Gastrocnemius medialis (tissue), 4 donors: ENCODE measurements at regions of chr15 and their contacts with region 1.

Region 1: GRCh38 chr15:63891079-63891767 is 57.5 kb upstream of the HERC1 start:
- DNase-seq: peak; percentile 39 to 79
- ATAC-seq: peak; percentile 27 to 39
- H3K4me3 ChIP-seq: no peak overlapping the region
- H3K27ac ChIP-seq: peak overlapping the region in 3 of 4 donors; percentile 15 to 93 (median 35)
- H3K4me1 ChIP-seq: peaks cover 58 to 66% of the 10 kb centered on the region in 2 donors
- H3K27me3 ChIP-seq: no peaks in the 10 kb centered on the region
- CTCF ChIP-seq: peak; percentile 80 to 87 (median 83)
- POLR2A ChIP-seq: no peak

Region 2: DNA sequence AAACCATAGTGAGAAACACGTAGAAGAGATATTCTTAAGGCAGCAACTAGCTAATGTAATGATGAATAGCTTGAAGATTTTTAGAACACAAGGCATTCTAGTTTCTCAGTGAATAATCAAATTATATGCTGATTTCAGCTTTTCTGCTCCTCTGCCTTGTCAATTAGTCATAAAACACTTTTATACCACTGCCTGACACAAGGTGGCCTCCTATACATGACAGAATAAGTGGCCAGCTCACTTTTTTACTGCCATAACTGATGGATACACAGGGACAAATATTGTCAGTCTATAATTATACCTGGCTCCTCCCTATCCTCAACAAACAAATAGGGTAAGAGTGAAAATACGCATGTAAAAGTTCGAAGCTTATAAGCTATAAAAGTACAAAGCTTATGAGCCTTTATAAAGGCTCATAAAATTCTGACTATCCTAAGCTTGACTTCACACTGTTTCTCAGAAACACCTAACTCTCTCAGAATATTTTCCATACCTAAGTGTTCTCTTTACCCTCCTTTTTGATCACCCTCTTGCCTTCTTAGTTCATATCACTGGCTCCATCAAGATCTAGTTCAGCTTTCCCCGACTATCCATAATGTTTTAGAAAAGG is 139.0 kb before region 1 on chr15:
- in situ Hi-C with region 1: loop called in 3 of 4 experiments (anchors 5 to 25 kb)
- intact Hi-C with region 1: loop called (anchors 1 kb)
- DNase-seq: peak in 1 of 2 donors; percentile 27
- ATAC-seq: peak; percentile 90 to 91
- H3K4me3 ChIP-seq: no peak overlapping the region
- H3K27ac ChIP-seq: peak overlapping the region; percentile 29 to 66 (median 50)
- H3K4me1 ChIP-seq: peaks cover 0 to 13% of the 10 kb centered on the region in 2 donors
- H3K27me3 ChIP-seq: no peaks in the 10 kb centered on the region
- CTCF ChIP-seq: peak; percentile 77 to 82 (median 79)
- POLR2A ChIP-seq: no peak

Region 3: GRCh38 chr15:63833021-63833696 is 58.1 kb before region 1 on chr15:
- in situ Hi-C with region 1: no loop called
- intact Hi-C with region 1: loop called (anchors 2 kb)
- DNase-seq: peak; percentile 5 to 46
- ATAC-seq: peak; percentile 53 to 68
- H3K4me3 ChIP-seq: peak overlapping the region; percentile 83 to 95 (median 90)
- H3K27ac ChIP-seq: peak overlapping the region; percentile 90 to 98 (median 96)
- H3K4me1 ChIP-seq: peaks cover 24 to 35% of the 10 kb centered on the region in 2 donors
- H3K27me3 ChIP-seq: no peaks in the 10 kb centered on the region
- CTCF ChIP-seq: no peak
- POLR2A ChIP-seq: no peak

Region 4: DNA sequence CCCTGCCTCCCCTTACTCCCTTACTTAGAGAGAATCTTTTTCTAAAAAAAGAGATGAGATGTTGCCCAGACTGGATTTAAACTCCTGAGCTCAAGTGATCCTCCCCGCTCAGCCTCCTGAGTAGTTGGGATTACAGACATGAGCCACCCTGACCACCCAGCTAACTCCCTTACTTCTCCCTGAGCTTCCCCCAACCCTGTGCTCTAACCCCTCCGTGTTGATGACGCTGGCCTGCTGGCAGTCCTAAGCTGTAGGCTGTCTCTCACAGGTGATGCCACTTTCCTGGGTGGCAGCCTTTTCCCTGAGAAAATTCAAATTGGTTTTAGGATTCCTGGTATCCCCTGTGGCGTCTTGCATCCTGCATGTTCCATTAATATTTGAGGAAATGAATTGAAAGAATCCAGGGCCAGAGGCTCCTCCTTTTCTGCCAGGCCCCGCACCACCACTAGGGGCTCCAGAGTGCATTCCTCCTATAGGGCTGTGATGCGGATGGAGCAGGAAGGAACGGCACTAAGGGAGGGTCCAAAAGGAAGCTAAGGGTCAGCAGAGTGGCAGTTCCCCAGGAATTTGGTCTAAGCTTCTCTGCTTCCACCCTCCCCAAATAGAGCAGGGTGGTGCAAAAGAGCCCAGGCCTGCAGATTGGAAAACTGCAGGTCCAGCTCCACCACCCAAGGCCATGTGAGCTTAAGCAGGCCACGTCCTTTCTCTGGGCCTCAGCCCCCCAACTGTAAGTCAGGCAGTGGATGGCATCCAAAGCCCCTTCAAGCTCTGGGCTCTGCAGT is 54.0 kb after region 1 on chr15:
- in situ Hi-C with region 1: no loop called
- intact Hi-C with region 1: no loop called
- DNase-seq: peak; percentile 38 to 61
- ATAC-seq: peak; percentile 53 to 65
- H3K4me3 ChIP-seq: no peak overlapping the region
- H3K27ac ChIP-seq: peak overlapping the region; percentile 24 to 75 (median 48)
- H3K4me1 ChIP-seq: peaks cover 18 to 20% of the 10 kb centered on the region in 2 donors
- H3K27me3 ChIP-seq: no peaks in the 10 kb centered on the region
- CTCF ChIP-seq: peak; percentile 76 to 90 (median 82)
- POLR2A ChIP-seq: no peak